B cell (primary cell): ENCODE measurements at regions of chr15 and their contacts with region 1.

Region 1: DNA sequence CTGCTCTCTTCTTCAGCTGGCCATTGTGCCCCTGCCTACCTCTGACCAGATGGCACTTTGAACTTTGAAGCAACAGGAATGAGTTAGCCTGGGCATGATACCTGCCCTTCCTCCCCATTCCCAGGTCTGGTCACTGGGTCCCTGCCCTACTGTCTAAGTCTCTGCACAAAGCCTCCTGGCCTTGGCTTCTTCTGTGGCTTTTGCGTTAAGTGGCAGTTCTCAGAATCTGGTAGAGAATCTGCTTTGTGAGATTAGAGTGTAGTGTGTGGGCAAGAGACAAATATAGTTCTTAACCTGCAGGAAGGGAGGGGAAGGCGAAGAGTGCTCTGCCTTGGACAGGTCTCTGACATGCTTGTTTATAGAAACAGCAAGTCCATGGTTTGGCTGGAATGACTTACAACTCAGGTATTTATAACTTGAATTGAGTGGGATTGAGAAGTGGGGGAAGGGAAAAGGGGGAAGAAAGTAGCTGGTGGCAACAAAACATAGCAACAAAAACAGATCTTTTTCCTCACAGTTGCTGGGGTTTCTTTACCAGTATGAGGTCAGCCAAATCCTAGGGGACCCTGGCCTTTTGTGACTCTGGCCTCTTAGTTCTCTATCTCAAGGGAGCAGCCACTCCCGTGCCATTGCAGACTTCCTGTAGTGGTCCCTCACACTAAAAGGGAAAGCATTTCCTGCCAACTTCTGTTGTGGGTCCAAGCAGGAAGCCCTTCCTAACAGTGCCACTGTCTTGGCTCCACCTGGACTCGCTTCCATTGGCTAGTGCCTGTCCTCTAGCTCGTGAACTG is 16.7 kb downstream of the MAPKBP1 start:
- DNase-seq: no peak
- ATAC-seq: no peak
- H3K4me3 ChIP-seq: no peak overlapping the region
- H3K4me3 Mint-ChIP-seq: peak overlapping the region; percentile 4
- H3K27ac ChIP-seq: no peak overlapping the region
- H3K27ac Mint-ChIP-seq: no peak overlapping the region
- H3K4me1 ChIP-seq: peaks cover 32 to 41% of the 10 kb centered on the region in 2 donors
- H3K4me1 Mint-ChIP-seq: peaks cover 54% of the 10 kb centered on the region
- H3K27me3 ChIP-seq: no peaks in the 10 kb centered on the region
- H3K27me3 Mint-ChIP-seq: no peaks in the 10 kb centered on the region
- CTCF ChIP-seq: no peak

Region 2: DNA sequence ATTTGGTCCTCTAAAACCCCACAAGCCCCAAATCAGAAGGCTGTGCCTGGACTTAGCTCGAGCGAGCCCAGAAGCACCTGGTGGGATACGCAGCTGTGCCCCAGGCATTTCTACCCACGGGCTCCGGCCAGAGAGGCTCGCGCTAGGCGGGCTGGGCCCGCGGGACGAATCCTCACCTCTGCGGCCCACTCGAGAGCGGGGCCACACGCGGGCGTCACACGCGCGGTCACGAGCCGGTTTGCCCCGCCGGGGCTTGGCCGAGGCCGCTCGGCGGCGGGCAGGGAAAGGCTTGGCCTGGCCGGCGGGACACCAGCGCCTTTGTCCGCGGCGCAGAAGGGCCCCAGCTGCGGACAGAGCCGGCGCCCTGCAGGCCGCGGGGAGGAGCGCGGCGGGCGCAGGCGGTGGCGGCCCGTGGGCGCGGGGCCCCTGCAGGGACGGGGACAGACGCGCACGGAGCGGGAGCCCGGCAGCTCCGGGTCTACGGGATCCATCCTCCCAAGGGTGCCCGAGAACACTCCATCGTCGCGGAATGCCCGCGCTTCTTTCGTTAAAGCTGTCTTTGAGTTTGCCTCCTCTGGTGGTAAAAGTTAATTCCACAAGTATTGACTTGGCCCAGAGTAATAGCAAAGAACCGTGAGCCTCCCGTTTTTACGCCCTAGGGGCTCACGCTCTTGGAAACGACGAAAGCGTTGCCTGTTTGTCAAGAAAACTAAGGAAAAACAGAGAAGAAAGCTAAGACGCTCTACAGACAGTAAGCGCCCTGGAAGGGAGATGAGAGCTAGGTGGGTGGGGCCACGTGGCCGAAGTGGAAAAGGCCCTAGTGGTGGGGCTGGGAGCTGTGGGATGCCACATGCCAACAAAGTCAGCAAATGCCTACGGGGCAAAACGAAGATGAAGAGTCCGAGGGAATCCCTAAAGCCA is 205.6 kb before region 1 on chr15:
- CTCF ChIA-PET with region 1: no interaction called
- POLR2A ChIA-PET with region 1: no interaction called
- intact Hi-C with region 1: no loop called
- DNase-seq: peak; percentile 59
- ATAC-seq: peak; percentile 53
- H3K4me3 ChIP-seq: peak overlapping the region; percentile 28 to 62 (median 38)
- H3K4me3 Mint-ChIP-seq: peak overlapping the region; percentile 86
- H3K27ac ChIP-seq: no peak overlapping the region
- H3K27ac Mint-ChIP-seq: peak overlapping the region; percentile 53
- H3K4me1 ChIP-seq: peaks cover 9 to 10% of the 10 kb centered on the region in 2 donors
- H3K4me1 Mint-ChIP-seq: peaks cover 6% of the 10 kb centered on the region
- H3K27me3 ChIP-seq: peaks cover 0 to 22% (median 10%) of the 10 kb centered on the region in 4 experiments
- H3K27me3 Mint-ChIP-seq: peaks cover 50% of the 10 kb centered on the region
- CTCF ChIP-seq: peak; percentile 34

Region 3: DNA sequence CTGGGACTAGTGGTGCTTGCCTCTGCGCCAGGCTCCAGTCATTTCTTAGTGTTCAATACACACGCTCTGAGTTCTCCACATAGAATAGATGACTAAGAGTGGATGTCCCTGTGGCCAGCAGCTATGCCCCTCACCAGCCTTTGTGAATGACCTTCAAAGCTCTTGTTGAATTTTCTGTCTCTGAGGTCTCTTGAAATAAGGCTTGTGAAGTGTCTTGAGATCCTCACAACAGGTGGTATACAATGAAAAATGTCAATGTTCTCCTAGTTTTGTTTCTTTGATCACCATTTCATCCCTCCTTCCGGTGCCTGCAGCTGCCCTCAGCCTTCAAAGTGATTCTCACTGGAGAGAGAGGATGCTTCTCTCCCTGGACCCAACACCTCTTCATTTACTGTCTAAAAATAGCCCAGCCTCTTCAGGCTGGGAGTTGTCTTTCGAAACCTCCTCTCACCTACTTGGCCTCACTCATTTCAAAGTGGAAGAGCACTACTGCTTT is 11.2 kb before region 1 on chr15:
- CTCF ChIA-PET with region 1: interaction called, 45 read pairs
- POLR2A ChIA-PET with region 1: no interaction called
- intact Hi-C with region 1: no loop called
- DNase-seq: no peak
- ATAC-seq: no peak
- H3K4me3 ChIP-seq: no peak overlapping the region
- H3K4me3 Mint-ChIP-seq: no peak overlapping the region
- H3K27ac ChIP-seq: no peak overlapping the region
- H3K27ac Mint-ChIP-seq: peak overlapping the region; percentile 60
- H3K4me1 ChIP-seq: peaks cover 34 to 40% of the 10 kb centered on the region in 2 donors
- H3K4me1 Mint-ChIP-seq: peaks cover 76% of the 10 kb centered on the region
- H3K27me3 ChIP-seq: no peaks in the 10 kb centered on the region
- H3K27me3 Mint-ChIP-seq: no peaks in the 10 kb centered on the region
- CTCF ChIP-seq: no peak